Common myeloid progenitor, CD34-positive (primary cell): ENCODE measurements at regions of chr3 and their contacts with region 1.

Region 1: DNA sequence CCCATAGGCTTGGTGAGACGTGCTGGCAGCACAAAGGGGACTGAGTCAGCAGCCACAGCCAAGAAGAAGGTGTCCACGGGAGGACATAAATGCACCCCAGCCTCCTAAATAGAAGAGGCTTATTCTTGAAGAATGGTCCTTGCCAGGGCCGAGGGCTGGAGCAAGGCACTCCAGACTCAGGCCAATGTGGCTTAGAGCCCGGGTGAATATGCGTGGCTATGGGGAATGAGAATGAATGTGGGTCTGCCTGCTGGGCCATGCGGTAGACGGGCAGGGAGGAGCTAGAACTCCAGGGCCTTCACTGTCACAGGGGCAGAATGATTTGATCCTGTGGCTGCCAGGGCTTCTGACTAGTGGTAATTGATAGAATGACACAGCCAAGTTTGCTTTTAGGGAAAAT is 34.0 kb downstream of the DHX30 start:
- DNase-seq: no peak
- H3K4me3 ChIP-seq: no peak overlapping the region
- H3K27ac ChIP-seq: no peak overlapping the region
- H3K4me1 ChIP-seq: no peaks in the 10 kb centered on the region
- H3K27me3 ChIP-seq: no peaks in the 10 kb centered on the region

Region 2: DNA sequence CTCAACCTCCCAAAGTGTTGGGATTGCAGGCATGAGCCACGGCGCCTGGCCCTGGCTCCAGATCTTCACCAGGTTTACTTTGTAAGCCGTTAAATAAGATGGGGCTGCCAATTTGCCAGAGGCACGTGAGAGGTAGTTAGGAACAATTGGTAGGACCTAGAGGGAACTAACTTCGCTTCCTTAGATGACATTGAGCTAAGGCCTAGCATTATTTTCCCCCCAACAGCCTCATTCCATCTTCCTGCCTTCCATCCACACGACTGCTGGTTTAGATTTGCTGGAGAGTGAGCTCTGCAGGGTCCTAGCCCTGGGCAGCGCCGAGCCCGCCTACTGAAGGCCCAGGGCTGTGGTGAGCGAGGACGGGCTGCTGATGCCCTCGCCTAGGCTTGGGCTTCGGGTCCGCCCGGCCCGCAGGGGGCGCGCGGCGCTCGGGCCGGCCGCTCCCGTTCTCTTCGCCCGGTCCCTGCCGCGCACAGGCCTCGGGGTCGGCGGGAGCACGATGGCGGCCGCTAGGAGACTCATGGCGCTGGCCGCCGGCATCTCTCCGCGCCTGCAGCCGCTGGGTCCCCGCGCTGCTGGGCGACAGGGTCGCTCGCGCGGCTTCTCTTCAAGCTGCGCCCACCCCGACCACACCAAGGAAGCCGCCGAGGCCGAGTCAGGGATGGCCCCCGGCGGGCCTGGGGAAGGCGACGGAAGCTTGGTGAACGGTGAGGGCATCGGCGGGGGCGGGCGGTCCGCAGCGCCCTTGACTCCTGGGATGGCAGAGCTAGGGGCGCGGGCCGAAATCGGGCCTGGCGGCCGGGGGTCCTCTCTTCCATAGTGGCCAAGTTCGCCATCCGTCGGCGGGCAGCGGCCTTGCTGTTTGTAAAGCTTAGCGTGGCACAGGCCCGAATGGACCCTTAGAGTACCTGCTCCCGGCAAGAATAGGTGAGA is 12.2 kb before region 1 on chr3:
- CTCF ChIA-PET with region 1: interaction called, 42 read pairs
- POLR2A ChIA-PET with region 1: interaction called, 9 read pairs
- DNase-seq: peak; percentile 80 to 86 (median 84)
- H3K4me3 ChIP-seq: peak overlapping the region; percentile 58 to 93 (median 85)
- H3K27ac ChIP-seq: peak overlapping the region; percentile 18 to 85
- H3K4me1 ChIP-seq: peaks cover 0 to 21% (median 18%) of the 10 kb centered on the region in 4 experiments
- H3K27me3 ChIP-seq: no peaks in the 10 kb centered on the region

Region 3: GRCh38 chr3:47856669-47857068 is 19.7 kb after region 1 on chr3:
- CTCF ChIA-PET with region 1: no interaction called
- POLR2A ChIA-PET with region 1: no interaction called
- DNase-seq: no peak
- H3K4me3 ChIP-seq: no peak overlapping the region
- H3K27ac ChIP-seq: no peak overlapping the region
- H3K4me1 ChIP-seq: peaks cover 0 to 2% (median 0%) of the 10 kb centered on the region in 4 experiments
- H3K27me3 ChIP-seq: no peaks in the 10 kb centered on the region

Region 4: GRCh38 chr3:47989981-47990440 is 153.0 kb after region 1 on chr3:
- CTCF ChIA-PET with region 1: interaction called, 10 read pairs
- POLR2A ChIA-PET with region 1: interaction called, 5 read pairs
- DNase-seq: peak; percentile 81 to 91 (median 88)
- H3K4me3 ChIP-seq: no peak overlapping the region
- H3K27ac ChIP-seq: no peak overlapping the region
- H3K4me1 ChIP-seq: no peaks in the 10 kb centered on the region
- H3K27me3 ChIP-seq: no peaks in the 10 kb centered on the region

Region 5: GRCh38 chr3:48151058-48151806 is 314.2 kb after region 1 on chr3:
- CTCF ChIA-PET with region 1: interaction called, 18 read pairs
- POLR2A ChIA-PET with region 1: no interaction called
- DNase-seq: peak; percentile 72 to 85 (median 81)
- H3K4me3 ChIP-seq: no peak overlapping the region
- H3K27ac ChIP-seq: no peak overlapping the region
- H3K4me1 ChIP-seq: no peaks in the 10 kb centered on the region
- H3K27me3 ChIP-seq: no peaks in the 10 kb centered on the region

Region 6: DNA sequence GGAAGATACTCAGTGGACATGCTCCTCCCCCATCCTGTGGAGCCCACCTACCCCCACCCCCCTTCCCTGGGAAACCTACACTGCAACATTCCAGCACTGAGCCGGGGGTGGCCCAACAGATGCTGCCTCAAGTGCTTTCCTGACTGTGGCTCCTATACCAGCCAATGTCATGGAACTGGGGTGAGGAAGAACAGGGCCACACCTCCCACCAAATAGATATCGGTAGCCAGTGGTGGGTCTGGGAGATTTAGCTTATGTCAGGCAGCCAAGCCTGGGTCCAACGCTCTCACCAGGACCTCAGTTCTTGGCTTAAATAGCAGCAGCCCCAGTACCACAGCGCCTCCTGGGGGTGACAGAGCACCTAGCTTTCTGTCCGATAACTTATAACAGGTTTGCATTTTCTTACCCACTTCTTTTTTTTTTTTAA is 321.0 kb after region 1 on chr3:
- CTCF ChIA-PET with region 1: interaction called, 18 read pairs
- POLR2A ChIA-PET with region 1: no interaction called
- DNase-seq: peak; percentile 67 to 82 (median 74)
- H3K4me3 ChIP-seq: no peak overlapping the region
- H3K27ac ChIP-seq: no peak overlapping the region
- H3K4me1 ChIP-seq: no peaks in the 10 kb centered on the region
- H3K27me3 ChIP-seq: no peaks in the 10 kb centered on the region